ENCODE measurements at regions of chr4 and their contacts with region 1.

Region 1: DNA sequence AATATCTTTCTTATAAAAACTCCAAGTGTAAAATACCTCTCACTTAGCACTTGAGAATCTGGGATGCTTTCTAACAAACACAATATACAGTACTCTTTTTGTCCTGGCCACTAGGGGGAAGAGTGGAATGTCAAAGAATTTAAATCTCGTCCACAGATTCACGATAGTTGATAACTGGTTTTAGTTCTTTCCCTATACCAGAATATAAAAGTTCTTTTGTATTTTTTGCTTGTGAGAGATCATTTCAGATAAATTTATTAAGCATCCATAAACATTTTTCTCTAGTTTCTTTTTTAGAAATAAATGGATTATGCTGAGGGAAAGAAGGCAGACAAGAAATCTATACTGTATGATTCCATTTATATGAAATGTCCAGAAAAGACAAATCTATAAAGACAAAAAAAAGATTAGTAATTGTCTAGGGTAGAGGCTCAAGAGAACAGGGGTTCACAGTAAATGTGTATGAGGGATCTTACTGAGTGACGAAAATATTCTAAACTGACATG is 50.4 kb downstream of the MGARP start:
- DNase-seq: peak; percentile 48 to 72 (median 71)
- H3K4me3 ChIP-seq: no peak overlapping the region
- H3K27ac ChIP-seq: no peak overlapping the region
- H3K4me1 ChIP-seq: peaks cover 0 to 8% (median 0%) of the 10 kb centered on the region in 4 experiments
- H3K27me3 ChIP-seq: no peaks in the 10 kb centered on the region

Region 2: DNA sequence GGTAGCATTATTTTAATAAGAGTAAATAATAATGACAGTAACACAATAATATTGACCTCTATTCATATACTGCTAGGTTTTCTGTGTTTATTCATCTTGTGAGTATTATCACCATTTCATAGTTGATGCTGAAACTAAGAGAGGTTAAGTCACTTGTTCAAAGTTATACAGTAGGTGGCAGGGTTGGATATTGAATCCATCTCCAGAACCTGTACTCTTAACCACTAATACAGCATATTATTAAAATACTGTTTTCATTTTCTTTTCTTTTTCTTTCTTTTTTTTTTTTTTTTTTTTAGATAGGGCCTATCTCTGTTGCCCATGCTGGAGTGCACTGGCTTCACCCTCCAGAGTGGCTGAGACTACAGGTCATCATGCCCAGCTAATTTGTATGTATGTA is 45.5 kb before region 1 on chr4:
- CTCF ChIA-PET with region 1: interaction called, 17 read pairs
- POLR2A ChIA-PET with region 1: no interaction called
- DNase-seq: peak; percentile 54 to 63 (median 63)
- H3K4me3 ChIP-seq: no peak overlapping the region
- H3K27ac ChIP-seq: no peak overlapping the region
- H3K4me1 ChIP-seq: peaks cover 4 to 10% (median 5%) of the 10 kb centered on the region in 4 experiments
- H3K27me3 ChIP-seq: no peaks in the 10 kb centered on the region

Region 3: GRCh38 chr4:139295206-139295941 is 65.8 kb after region 1 on chr4:
- CTCF ChIA-PET with region 1: interaction called, 19 read pairs
- POLR2A ChIA-PET with region 1: no interaction called
- DNase-seq: peak; percentile 94 to 97 (median 96)
- H3K4me3 ChIP-seq: peak overlapping the region; percentile 81 to 97 (median 88)
- H3K27ac ChIP-seq: peak overlapping the region; percentile 89 to 91
- H3K4me1 ChIP-seq: peaks cover 5 to 24% (median 16%) of the 10 kb centered on the region in 4 experiments
- H3K27me3 ChIP-seq: no peaks in the 10 kb centered on the region

Measured in common myeloid progenitor, CD34-positive (primary cell).